Naive thymus-derived CD8-positive, alpha-beta T cell (primary cell): ENCODE measurements at regions of chr11 and their contacts with region 1.

Region 1: DNA sequence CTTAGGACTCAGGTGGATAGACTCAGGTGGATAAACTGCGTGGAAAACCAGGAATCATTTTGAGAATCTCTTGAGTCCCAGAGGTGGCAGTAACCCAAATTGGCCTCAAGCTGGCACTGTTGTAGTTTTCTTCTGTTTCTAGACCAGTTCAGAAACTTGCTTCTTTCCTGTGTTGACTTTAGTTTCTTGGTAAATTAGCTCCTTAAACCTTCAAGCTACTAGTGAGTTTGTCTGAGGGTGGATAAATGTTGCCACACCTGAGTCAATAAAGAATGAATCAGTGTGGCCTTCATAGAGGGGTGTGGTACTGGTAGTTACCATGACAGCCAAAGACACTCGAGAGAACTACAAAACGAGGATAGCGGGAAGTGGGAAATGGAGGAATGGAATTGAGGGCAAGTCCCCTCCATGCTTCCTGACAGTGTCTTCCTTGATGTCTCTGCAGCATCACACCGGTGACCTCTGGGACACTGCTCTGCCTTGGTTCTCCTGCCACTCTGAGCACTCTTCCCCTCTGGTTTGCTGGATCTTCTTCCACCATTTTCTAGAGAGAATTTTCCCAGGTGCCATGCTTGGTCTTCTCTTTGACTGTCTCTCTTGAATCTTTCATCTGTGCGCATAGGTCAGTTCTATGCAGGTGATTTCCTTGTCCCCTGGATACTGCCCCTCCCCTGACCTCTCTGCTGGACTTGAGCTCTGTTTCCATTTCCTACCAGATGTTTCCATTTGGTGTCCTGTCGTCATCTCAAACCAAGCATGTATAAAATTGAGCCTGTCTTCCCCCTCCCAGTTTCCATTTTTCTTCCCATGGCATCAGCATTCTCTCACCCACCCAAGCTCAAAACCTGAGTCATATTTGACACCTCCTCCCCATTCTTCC is 7.2 kb downstream of the POLD4 start:
- DNase-seq: peak in 3 of 10 donors; percentile 29 to 57 (median 47)
- ATAC-seq: peak; percentile 58 to 74
- H3K4me3 Mint-ChIP-seq: peak overlapping the region in 8 of 10 donors; percentile 12 to 76 (median 66)
- H3K27ac Mint-ChIP-seq: peak overlapping the region in 9 of 10 donors; percentile 89 to 99 (median 94)
- H3K4me1 Mint-ChIP-seq: peaks cover 29 to 65% (median 61%) of the 10 kb centered on the region in 4 donors
- H3K27me3 Mint-ChIP-seq: no peaks in the 10 kb centered on the region

Region 2: DNA sequence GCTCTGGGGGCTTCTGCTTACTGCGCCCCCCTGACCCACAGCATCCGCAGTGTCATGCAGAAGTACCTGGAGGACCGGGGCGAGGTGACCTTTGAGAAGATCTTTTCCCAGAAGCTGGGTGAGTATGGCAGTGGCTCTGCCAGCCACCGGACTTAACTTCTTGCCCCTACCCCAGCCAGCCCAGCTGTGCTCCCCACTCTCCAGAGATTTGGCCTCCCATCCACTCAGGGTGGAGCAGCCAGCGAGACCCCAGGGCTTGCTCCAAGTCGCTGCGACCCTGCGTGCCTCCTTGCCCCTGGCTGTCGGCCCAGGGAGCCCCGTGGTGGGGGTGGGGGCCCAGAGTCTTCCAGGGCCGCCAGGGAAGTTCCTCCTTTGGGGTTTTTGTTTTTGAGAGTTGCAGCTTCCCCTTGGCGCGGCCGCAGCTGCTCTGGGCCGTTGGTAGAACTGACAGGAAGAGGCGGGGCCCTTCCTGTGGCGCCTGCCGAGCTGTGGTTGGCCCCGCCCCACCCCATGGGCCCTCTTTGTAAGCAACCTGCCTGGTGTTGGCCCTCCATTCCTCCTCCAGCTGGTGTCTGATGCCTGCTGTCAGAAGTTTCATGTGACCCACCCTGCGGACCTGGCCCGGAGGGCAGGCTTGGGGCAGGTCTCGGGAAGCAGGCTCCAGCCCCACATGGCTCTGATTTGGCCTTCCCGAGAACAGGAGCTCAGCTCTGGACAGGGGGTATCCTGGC is 68.8 kb before region 1 on chr11:
- POLR2A ChIA-PET with region 1: interaction called, 14 read pairs
- DNase-seq: peak; percentile 84 to 95 (median 90)
- ATAC-seq: peak; percentile 89 to 96
- H3K4me3 Mint-ChIP-seq: peak overlapping the region; percentile 74 to 98 (median 86)
- H3K27ac Mint-ChIP-seq: peak overlapping the region; percentile 90 to 100 (median 98)
- H3K4me1 Mint-ChIP-seq: peaks cover 28 to 83% (median 78%) of the 10 kb centered on the region in 4 donors
- H3K27me3 Mint-ChIP-seq: no peaks in the 10 kb centered on the region

Region 3: GRCh38 chr11:67382276-67383136 is 36.3 kb after region 1 on chr11:
- POLR2A ChIA-PET with region 1: interaction called, 493 read pairs
- DNase-seq: peak; percentile 70 to 90 (median 82)
- ATAC-seq: peak; percentile 95 to 98
- H3K4me3 Mint-ChIP-seq: peak overlapping the region in 2 of 10 donors; percentile 57 to 66
- H3K27ac Mint-ChIP-seq: peak overlapping the region in 7 of 10 donors; percentile 37 to 80 (median 66)
- H3K4me1 Mint-ChIP-seq: peaks cover 7 to 24% (median 13%) of the 10 kb centered on the region in 4 donors
- H3K27me3 Mint-ChIP-seq: peaks cover 0 to 2% (median 0%) of the 10 kb centered on the region in 5 donors

Region 4: DNA sequence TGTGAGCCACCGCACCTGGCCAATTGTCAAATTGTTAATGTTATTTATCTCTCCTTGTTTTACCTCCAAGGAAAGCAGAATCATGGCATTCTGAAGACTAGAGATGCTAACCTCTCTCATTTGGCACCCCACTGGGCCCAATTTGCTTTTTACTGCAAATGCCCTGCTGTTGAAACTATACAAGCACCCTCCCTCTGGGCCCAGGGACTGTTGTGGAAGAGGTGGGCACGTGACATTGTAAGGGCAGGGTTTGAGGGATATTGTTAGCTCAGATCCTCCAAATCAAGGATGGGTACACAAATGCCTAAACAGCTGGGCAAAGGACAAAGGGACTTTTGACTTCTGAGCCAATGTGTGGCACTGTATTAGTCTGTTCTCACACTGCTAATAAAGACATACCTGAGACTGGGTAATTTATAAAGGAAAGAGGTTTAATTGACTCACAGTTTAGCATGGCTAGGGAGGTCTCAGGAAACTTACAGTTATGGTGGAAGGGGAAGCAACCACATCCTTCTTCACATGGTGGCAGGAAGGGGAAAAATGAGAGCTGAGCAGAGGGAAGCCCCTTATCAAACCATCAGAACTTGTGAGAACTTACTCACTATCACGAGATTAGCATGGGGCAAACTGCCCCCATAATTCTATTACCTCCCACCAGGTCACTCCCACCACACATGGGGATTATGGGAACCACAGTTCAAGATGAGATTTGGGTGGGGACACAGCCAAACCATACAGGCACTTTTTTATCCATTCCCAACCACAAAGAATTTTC is 334.7 kb after region 1 on chr11:
- POLR2A ChIA-PET with region 1: no interaction called
- DNase-seq: no peak
- ATAC-seq: no peak
- H3K4me3 Mint-ChIP-seq: no peak overlapping the region
- H3K27ac Mint-ChIP-seq: no peak overlapping the region
- H3K4me1 Mint-ChIP-seq: peaks cover 0 to 5% (median under 1%) of the 10 kb centered on the region in 4 donors
- H3K27me3 Mint-ChIP-seq: peaks cover 0 to 9% (median 0%) of the 10 kb centered on the region in 5 donors